ENCODE measurements at regions of chr11 and their contacts with region 1.

Region 1: DNA sequence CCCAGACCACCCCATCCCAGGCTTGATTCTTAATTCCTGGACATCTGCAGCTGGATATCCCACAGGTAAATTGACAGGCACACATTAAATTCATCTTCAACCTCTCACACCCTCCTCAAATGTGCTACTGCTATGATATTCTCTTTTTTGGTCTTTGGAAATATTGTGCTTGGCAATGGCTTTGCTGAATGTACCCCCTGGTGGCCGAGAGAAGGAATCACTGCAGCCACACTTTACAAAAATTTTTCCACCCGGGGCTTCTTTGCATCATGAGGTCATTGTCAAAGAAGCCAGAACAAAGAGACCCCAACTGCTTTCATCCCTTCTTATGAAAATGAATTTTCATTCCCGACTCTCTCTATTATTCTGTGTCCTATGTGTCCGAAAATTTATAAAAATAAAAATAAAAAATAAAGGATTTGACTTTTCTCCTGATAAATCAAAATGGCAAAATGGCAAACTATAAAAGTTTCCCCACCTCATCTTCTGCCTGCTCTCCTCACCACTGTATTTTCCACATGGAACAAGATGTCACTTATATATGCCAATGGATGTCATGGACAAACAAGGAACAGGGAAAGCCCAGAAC is 15.0 kb upstream of the CYB5R2 start:
- DNase-seq: no peak
- ATAC-seq: no peak

Region 2: GRCh38 chr11:6057452-6057851 is 1630.9 kb before region 1 on chr11:
- intact Hi-C with region 1: no loop called
- DNase-seq: no peak
- ATAC-seq: no peak

Region 3: GRCh38 chr11:7571640-7572000 is 116.7 kb before region 1 on chr11:
- intact Hi-C with region 1: loop called in 1 of 2 experiments (anchors 5 kb)
- DNase-seq: peak; percentile 63 to 79
- ATAC-seq: peak; percentile 38

Measured in left colon (tissue), 2 donors.